Activated CD8-positive, alpha-beta T cell treated with anti-CD3 and anti-CD28 coated beads, Interleukin-2, amount 10 ng/mL, durations not matched to agents 7 days and 5 days (primary cell): ENCODE measurements at regions of chr19 and their contacts with region 1.

Region 1: DNA sequence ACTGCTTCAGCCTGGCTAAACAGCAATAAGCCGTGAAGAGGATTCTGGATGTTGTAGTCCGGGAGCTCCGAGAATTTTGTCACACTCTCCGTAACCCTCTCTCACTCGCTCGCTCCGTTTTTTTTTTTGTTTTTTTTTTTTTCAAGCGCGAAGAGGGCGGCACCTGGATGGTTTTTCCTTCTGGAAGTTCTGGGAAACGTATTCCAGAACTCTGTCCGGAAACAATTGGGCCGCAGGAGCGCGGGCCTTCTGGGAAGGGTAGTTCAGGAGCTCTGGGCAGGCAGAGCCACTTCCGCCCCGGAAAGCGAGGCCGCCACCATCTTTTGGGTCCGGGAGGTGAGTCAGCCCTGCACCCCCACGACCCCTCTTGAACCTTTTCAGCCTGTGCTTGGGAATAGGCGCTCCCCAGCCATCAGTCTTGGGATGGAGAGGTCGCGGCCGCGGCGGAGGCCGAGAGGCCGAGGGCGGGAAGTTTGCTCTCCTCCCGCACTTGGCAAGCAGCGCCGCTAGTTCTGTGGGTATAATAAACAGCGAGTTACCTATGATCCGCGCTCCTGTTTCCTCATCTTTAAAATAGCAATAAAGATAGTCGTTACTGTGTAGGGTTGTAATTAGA is at the start of gene ZNF227:
- DNase-seq: peak; percentile 85
- ATAC-seq: peak; percentile 95
- H3K4me3 Mint-ChIP-seq: peak within 1 kb of the TSS; percentile 93
- H3K27ac Mint-ChIP-seq: peak within 1 kb of the TSS; percentile 91
- H3K4me1 Mint-ChIP-seq: peaks cover 28% of the 10 kb centered on the region
- H3K27me3 Mint-ChIP-seq: no peaks in the 10 kb centered on the region
- total RNA-seq, gene ZNF227: 22.8 to 27.7 TPM

Region 2: GRCh38 chr19:44164673-44165512 is 47.5 kb before region 1 on chr19 and contains the start of gene ZNF226:
- CTCF ChIA-PET with region 1: no interaction called
- POLR2A ChIA-PET with region 1: interaction called, 11 read pairs
- DNase-seq: peak; percentile 86
- ATAC-seq: peak; percentile 90
- H3K4me3 Mint-ChIP-seq: peak within 1 kb of the TSS; percentile 94
- H3K27ac Mint-ChIP-seq: peak within 1 kb of the TSS; percentile 96
- H3K4me1 Mint-ChIP-seq: peaks cover 28% of the 10 kb centered on the region
- H3K27me3 Mint-ChIP-seq: no peaks in the 10 kb centered on the region
- total RNA-seq, gene ZNF226: 12.9 to 14.7 TPM

Region 3: GRCh38 chr19:44192127-44192526 is 20.2 kb before region 1 on chr19:
- CTCF ChIA-PET with region 1: no interaction called
- POLR2A ChIA-PET with region 1: no interaction called
- DNase-seq: no peak
- ATAC-seq: no peak
- H3K4me3 Mint-ChIP-seq: no peak overlapping the region
- H3K27ac Mint-ChIP-seq: no peak overlapping the region
- H3K4me1 Mint-ChIP-seq: no peaks in the 10 kb centered on the region
- H3K27me3 Mint-ChIP-seq: peaks cover 3% of the 10 kb centered on the region